H1 (cell line): ENCODE measurements at regions of chr5 and their contacts with region 1.

Region 1: GRCh38 chr5:140840978-140841959 is at the start of gene PCDHA8:
- DNase-seq: peak in 1 of 2 experiments; percentile 84
- H3K4me3 ChIP-seq: peak within 1 kb of the TSS in 3 of 4 experiments; percentile 29 to 47 (median 29); a peak in 4 of 8 replicates
- H3K27ac ChIP-seq: no peak within 1 kb of the TSS
- H3K4me1 ChIP-seq: no peaks in the 10 kb centered on the region
- H3K27me3 ChIP-seq: no peaks in the 10 kb centered on the region
- CTCF ChIP-seq: peak; percentile 63 to 81 (median 79)
- EP300 ChIP-seq: no peak
- POLR2A ChIP-seq: no peak
- RAD21 ChIP-seq: peak; percentile 70 to 76
- total RNA-seq, gene PCDHA8: 0.52 and 0.96 TPM in 2 replicates

Region 2: GRCh38 chr5:140806834-140807775 is 34.2 kb before region 1 on chr5 and contains the start of gene PCDHA4:
- CTCF ChIA-PET with region 1: interaction called, 42 read pairs
- POLR2A ChIA-PET with region 1: interaction called, 3 read pairs
- DNase-seq: peak in 1 of 2 experiments; percentile 94
- H3K4me3 ChIP-seq: peak within 1 kb of the TSS; percentile 80 to 88 (median 85)
- H3K27ac ChIP-seq: peak within 1 kb of the TSS; percentile 31; the same call in 1 of the 2 replicates
- H3K4me1 ChIP-seq: no peaks in the 10 kb centered on the region
- H3K27me3 ChIP-seq: no peaks in the 10 kb centered on the region
- CTCF ChIP-seq: peak; percentile 75 to 81 (median 81)
- EP300 ChIP-seq: no peak
- POLR2A ChIP-seq: peak in 1 of 2 experiments; percentile 59; a peak in 2 of 3 replicates
- RAD21 ChIP-seq: peak; percentile 75 to 76
- total RNA-seq, gene PCDHA4: 5.3 and 5.7 TPM in 2 replicates

Region 3: GRCh38 chr5:140827704-140828361 is 13.4 kb before region 1 on chr5 and contains the start of gene PCDHA6:
- CTCF ChIA-PET with region 1: interaction called, 40 read pairs
- POLR2A ChIA-PET with region 1: interaction called, 5 read pairs
- DNase-seq: no peak
- H3K4me3 ChIP-seq: peak within 1 kb of the TSS in 1 of 4 experiments; percentile 62; a peak in 2 of 8 replicates
- H3K27ac ChIP-seq: no peak within 1 kb of the TSS
- H3K4me1 ChIP-seq: no peaks in the 10 kb centered on the region
- H3K27me3 ChIP-seq: no peaks in the 10 kb centered on the region
- CTCF ChIP-seq: no peak
- EP300 ChIP-seq: no peak
- POLR2A ChIP-seq: no peak
- RAD21 ChIP-seq: no peak
- total RNA-seq, gene PCDHA6: 6.5 and 7.1 TPM in 2 replicates

Region 4: GRCh38 chr5:140862441-140863295 is 21.4 kb after region 1 on chr5:
- CTCF ChIA-PET with region 1: interaction called, 122 read pairs
- POLR2A ChIA-PET with region 1: interaction called, 4 read pairs
- DNase-seq: no peak
- H3K4me3 ChIP-seq: no peak overlapping the region
- H3K27ac ChIP-seq: no peak overlapping the region
- H3K4me1 ChIP-seq: no peaks in the 10 kb centered on the region
- H3K27me3 ChIP-seq: no peaks in the 10 kb centered on the region
- CTCF ChIP-seq: no peak
- EP300 ChIP-seq: no peak
- POLR2A ChIP-seq: no peak
- RAD21 ChIP-seq: no peak

Region 5: DNA sequence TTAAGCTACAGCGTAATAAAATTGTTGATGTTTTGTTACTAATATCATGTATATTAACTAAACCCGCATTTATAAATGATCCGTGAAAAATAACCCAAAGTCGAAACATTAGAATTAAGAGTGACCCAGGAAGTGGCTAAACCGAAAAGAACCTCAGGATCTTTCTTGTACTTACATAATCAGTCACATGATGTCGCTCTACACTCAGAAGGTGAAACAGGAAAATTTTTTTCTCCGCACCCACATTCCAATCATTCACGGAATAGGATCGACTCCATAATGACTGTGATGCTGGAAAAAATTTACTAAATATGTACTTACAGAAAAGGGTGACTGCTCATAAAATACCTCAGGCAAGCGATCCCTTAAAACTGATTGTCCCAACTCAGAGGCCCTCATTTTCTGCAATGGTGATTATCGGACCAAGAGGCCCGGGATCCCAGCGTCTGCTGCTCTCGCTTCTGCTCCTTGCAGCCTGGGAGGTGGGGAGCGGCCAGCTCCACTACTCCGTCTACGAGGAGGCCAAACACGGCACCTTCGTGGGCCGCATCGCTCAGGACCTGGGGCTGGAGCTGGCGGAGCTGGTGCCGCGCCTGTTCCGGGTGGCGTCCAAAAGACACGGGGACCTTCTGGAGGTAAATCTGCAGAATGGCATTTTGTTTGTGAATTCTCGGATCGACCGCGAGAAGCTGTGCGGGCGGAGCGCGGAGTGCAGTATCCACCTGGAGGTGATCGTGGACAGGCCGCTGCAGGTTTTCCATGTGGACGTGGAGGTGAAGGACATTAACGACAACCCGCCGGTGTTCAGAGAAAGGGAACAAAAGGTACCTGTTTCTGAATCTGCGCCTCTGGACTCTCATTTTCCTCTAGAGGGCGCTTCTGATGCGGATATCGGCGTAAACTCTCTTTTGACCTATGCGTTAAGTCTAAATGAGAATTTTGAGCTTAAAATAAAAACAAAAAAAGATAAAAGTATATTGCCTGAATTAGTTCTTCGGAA is 34.1 kb after region 1 on chr5 and contains the start of gene PCDHA12:
- CTCF ChIA-PET with region 1: interaction called, 42 read pairs
- POLR2A ChIA-PET with region 1: interaction called, 3 read pairs
- DNase-seq: no peak
- H3K4me3 ChIP-seq: peak within 1 kb of the TSS; percentile 55 to 67 (median 65)
- H3K27ac ChIP-seq: no peak within 1 kb of the TSS
- H3K4me1 ChIP-seq: no peaks in the 10 kb centered on the region; a peak in 2 of 7 replicates
- H3K27me3 ChIP-seq: no peaks in the 10 kb centered on the region
- CTCF ChIP-seq: peak in 2 of 3 experiments; percentile 64 to 69; a peak in 3 of 4 replicates
- EP300 ChIP-seq: no peak
- POLR2A ChIP-seq: peak in 1 of 2 experiments; percentile 68; a peak in 2 of 3 replicates
- RAD21 ChIP-seq: peak; percentile 69 to 73
- total RNA-seq, gene PCDHA12: 9.3 and 10.6 TPM in 2 replicates